ENCODE measurements at regions of chr3 and their contacts with region 1.

Region 1: GRCh38 chr3:38479431-38480092 is 16.6 kb upstream of the EXOG start:
- DNase-seq: peak; percentile 79
- H3K4me3 ChIP-seq: no peak overlapping the region
- H3K27ac ChIP-seq: no peak overlapping the region
- H3K4me1 ChIP-seq: no peaks in the 10 kb centered on the region
- H3K27me3 ChIP-seq: no peaks in the 10 kb centered on the region

Region 2: DNA sequence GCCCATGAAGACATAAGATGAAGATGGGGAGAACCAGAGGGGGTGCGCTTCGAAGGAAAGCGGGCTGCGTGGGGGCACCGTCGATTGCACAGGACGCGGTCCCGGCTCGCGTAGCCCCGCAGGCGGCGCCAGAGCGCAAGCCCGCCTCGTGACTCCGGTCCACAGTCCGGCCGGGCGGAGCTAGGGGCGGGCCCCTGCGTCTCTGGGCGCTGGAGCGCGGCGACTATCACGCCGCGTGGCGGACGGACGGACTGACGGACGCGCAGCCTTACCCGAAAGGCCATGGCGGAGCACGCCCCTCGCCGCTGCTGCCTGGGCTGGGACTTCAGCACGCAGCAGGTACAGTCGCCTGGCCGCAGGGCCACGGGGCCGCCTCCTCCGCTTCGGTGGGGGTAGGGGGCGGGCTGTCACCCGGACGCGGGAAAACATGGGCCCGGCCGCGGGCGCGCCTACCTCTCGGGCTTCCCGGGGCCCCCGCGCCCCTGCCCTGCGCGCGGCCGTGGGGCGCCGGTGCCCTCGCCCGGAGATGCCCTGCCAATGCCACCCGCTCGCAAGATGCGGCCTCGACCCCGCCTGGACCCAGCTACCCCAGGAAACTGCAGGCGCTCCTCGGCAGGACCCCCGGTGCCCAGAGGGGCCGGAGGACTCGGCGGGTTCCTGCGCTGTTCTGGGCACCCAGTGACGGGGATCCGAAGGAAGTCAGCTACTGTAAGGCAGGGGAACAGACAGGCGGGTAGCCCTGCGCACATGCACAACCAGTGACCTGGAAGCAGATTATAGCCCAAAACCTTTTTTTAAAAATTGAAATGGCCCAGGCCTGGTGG is 132.8 kb before region 1 on chr3 and contains the start of gene XYLB:
- in situ Hi-C with region 1: loop called (anchors 10 kb)
- DNase-seq: peak; percentile 96
- H3K4me3 ChIP-seq: peak within 1 kb of the TSS; percentile 81
- H3K27ac ChIP-seq: no peak within 1 kb of the TSS
- H3K4me1 ChIP-seq: peaks cover 20% of the 10 kb centered on the region; the same call in 1 of the 2 replicates
- H3K27me3 ChIP-seq: no peaks in the 10 kb centered on the region
- total RNA-seq, gene XYLB: 4.1 and 4.8 TPM in 2 replicates

Measured in GM23248 (cell line).